PC-9 (cell line): ENCODE measurements at regions of chr10 and their contacts with region 1.

Region 1: GRCh38 chr10:12279281-12279680 is 70.1 kb upstream of the CAMK1D start:
- DNase-seq: no peak
- H3K4me3 ChIP-seq: no peak overlapping the region
- H3K27ac ChIP-seq: no peak overlapping the region
- H3K4me1 ChIP-seq: no peaks in the 10 kb centered on the region
- H3K27me3 ChIP-seq: no peaks in the 10 kb centered on the region
- CTCF ChIP-seq: no peak

Region 2: GRCh38 chr10:12434277-12434676 is 155.0 kb after region 1 on chr10:
- CTCF ChIA-PET with region 1: no interaction called
- POLR2A ChIA-PET with region 1: interaction called, 44 read pairs
- intact Hi-C with region 1: no loop called
- DNase-seq: no peak
- H3K4me3 ChIP-seq: no peak overlapping the region
- H3K27ac ChIP-seq: peak overlapping the region; percentile 70
- H3K4me1 ChIP-seq: peaks cover 33% of the 10 kb centered on the region
- H3K27me3 ChIP-seq: no peaks in the 10 kb centered on the region
- CTCF ChIP-seq: no peak

Region 3: DNA sequence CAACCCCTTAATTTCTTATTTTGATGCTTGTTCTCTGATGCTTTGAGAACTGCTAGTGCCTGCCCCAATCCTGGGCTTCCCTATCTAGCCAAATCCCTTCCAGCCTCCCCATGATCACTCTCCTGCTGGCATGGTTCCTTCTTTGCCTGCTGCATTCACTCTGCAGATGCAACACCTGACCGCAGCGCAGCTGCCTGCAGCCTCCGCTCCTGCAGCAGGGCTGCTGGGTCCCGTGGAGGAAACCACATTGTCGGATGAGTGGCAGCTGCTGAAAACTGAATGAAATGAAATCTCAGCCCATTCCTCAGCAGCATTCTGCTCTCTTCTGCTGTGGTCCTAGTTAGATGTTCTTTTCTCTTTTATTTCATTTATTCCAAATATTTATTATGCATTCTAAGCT is 402.0 kb after region 1 on chr10:
- CTCF ChIA-PET with region 1: no interaction called
- POLR2A ChIA-PET with region 1: no interaction called
- intact Hi-C with region 1: no loop called
- DNase-seq: no peak
- H3K4me3 ChIP-seq: no peak overlapping the region
- H3K27ac ChIP-seq: no peak overlapping the region
- H3K4me1 ChIP-seq: no peaks in the 10 kb centered on the region
- H3K27me3 ChIP-seq: no peaks in the 10 kb centered on the region
- CTCF ChIP-seq: no peak